ENCODE measurements at regions of chr1 and their contacts with region 1.

Region 1: DNA sequence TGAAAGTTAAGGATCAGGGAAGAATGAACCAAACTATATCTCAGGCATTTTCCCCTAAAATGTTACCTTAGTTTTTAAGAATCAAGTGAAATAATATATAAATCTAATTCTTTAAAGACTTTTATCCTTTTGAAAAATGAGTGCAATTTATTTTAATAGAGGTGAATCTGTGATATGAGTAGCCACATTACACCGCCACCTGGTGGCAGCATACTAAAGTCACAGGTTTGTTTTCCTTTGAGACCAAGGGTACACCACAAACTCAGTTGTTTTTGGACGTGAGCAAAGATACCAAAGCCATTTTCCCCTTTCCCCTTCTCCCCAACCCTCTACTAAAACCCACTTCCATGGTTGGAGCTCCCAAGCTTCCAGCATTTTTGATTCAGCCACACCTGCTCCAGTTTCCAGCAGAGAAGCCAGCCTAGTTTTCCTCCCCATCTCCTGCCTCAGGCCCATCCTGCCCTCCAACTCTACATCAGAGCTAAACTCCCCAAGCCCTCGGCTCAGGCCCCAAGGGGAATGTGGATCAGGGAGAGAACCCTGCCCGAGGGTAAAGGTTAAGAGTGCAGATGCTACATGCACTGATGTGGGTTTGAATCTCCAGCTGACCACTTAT is 22.9 kb upstream of the LDLRAP1 start:
- DNase-seq: peak; percentile 82
- H3K4me3 Mint-ChIP-seq: no peak overlapping the region
- H3K27ac Mint-ChIP-seq: no peak overlapping the region
- H3K4me1 Mint-ChIP-seq: peaks cover 7% of the 10 kb centered on the region
- H3K27me3 Mint-ChIP-seq: peaks cover 40% of the 10 kb centered on the region

Region 2: GRCh38 chr1:25503551-25504426 is 16.8 kb before region 1 on chr1:
- CTCF ChIA-PET with region 1: interaction called, 58 read pairs
- DNase-seq: peak; percentile 83
- H3K4me3 Mint-ChIP-seq: no peak overlapping the region
- H3K27ac Mint-ChIP-seq: no peak overlapping the region
- H3K4me1 Mint-ChIP-seq: peaks cover 27% of the 10 kb centered on the region
- H3K27me3 Mint-ChIP-seq: peaks cover 6% of the 10 kb centered on the region